Activated CD4-positive, alpha-beta T cell treated with anti-CD3 and anti-CD28 coated beads, Interleukin-2, amount 10 ng/mL, durations not matched to agents 24 days and 14 days (primary cell): ENCODE measurements at regions of chr19 and their contacts with region 1.

Region 1: DNA sequence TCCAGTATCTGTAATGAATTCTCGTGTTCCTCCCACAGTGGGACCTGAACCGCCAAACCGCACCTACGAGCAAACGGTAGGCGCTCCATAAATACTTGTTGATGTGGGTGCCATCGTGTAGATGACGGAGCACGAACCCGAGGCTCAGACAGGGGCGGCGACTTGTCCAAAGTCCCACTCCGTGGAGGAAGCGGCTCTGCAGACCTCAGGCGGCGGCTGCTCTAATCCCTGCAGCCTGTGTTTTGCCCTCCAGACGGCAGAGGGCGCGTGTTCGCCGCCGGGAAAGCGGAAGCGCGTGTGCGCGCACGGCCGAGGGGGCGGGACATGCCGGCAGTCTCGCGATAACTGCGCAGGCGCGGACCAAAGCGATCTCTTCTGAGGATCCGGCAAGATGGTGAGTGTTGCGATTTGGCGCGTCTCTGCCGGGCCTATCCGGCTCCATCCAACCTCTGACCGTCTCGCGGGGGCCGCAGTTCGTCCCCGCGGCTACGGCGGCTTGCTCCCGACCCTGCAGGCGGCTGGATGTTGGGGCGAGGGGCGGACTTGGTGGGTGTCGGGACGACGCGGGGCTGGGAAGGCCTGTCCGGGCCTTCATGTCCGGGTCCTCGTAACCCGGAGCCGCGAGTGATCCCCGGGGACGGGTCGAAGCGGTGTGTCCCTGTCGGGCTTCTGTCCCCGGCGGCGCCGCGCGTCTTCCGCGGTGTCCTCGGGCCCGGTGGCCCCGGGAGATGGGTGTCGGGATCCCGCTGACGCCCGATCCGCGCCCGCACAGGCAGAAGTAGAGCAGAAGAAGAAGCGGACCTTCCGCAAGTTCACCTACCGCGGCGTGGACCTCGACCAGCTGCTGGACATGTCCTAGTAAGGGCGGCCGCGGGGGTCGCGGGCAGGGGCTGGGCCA is at the start of gene RPS15:
- DNase-seq: peak; percentile 99
- H3K4me3 Mint-ChIP-seq: peak within 1 kb of the TSS; percentile 93
- H3K27ac Mint-ChIP-seq: peak within 1 kb of the TSS; percentile 100
- H3K4me1 Mint-ChIP-seq: peaks cover 18% of the 10 kb centered on the region
- H3K27me3 Mint-ChIP-seq: no peaks in the 10 kb centered on the region
- total RNA-seq, gene RPS15: 1,536 and 1,542 TPM in 2 replicates

Region 2: GRCh38 chr19:1406774-1407499 is 31.3 kb before region 1 on chr19:
- intact Hi-C with region 1: loop called (anchors 1 kb)
- DNase-seq: peak; percentile 100
- H3K4me3 Mint-ChIP-seq: peak overlapping the region; percentile 76
- H3K27ac Mint-ChIP-seq: peak overlapping the region; percentile 81
- H3K4me1 Mint-ChIP-seq: peaks cover 37% of the 10 kb centered on the region
- H3K27me3 Mint-ChIP-seq: peaks cover 6% of the 10 kb centered on the region

Region 3: DNA sequence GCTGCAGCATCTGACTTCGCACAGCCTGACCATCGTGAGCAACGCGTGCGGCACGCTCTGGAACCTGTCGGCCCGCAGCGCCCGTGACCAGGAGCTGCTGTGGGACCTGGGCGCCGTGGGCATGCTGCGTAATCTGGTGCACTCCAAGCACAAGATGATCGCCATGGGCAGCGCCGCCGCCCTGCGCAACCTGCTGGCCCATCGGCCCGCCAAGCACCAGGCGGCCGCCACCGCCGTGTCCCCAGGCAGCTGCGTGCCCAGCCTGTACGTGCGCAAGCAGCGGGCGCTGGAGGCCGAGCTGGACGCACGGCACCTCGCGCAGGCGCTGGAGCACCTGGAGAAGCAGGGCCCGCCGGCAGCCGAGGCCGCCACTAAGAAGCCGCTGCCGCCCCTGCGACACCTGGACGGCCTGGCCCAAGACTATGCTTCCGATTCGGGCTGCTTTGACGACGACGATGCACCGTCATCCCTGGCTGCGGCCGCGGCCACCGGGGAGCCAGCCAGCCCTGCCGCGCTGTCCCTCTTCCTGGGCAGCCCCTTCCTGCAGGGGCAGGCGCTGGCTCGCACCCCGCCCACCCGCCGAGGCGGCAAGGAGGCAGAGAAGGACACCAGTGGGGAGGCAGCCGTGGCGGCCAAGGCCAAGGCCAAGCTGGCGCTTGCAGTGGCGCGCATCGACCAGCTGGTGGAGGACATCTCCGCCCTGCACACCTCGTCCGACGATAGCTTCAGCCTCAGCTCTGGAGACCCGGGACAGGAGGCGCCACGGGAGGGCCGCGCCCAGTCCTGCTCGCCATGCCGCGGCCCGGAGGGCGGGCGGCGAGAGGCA is 27.1 kb after region 1 on chr19:
- intact Hi-C with region 1: no loop called
- DNase-seq: peak; percentile 72
- H3K4me3 Mint-ChIP-seq: no peak overlapping the region
- H3K27ac Mint-ChIP-seq: no peak overlapping the region
- H3K4me1 Mint-ChIP-seq: no peaks in the 10 kb centered on the region
- H3K27me3 Mint-ChIP-seq: peaks cover 1% of the 10 kb centered on the region